OCI-LY7 (cell line): ENCODE measurements at regions of chr6 and their contacts with region 1.

Region 1: GRCh38 chr6:129498950-129499842 is 210.8 kb downstream of the ARHGAP18 start:
- DNase-seq: peak; percentile 52
- H3K4me3 ChIP-seq: no peak overlapping the region
- H3K27ac ChIP-seq: no peak overlapping the region
- H3K4me1 ChIP-seq: no peaks in the 10 kb centered on the region
- CTCF ChIP-seq: peak; percentile 90

Region 2: DNA sequence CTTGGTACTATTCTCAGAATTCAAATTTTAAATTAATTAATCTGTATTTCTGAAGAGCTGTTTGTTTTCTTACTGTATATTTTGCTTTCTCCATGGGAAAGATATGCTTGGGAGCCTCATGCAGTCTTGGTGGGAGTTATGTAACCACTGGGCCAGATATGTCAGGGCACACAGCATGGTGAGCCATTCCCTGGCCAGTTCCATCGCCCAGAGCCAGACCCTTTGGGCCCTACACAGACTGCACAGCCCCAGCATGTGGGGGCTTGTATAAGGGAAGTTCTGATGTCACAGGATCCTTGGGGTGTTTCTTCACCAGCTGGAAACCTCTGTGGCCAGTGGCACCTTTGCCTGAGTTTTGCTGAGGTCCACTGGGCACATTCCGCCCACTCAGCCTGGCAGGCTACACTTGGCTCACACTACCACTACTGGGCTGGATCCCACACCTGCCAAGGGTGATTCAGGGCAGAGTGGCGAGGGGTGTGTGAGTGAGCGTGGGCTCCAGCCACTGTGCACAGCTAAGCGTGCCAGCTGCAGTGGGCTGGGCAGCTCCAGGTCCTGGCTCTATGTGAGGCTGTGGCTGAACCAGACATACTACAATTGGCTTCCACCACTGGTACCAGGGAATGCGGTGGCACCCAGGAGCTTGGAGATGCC is 82.7 kb before region 1 on chr6:
- CTCF ChIA-PET with region 1: no interaction called
- POLR2A ChIA-PET with region 1: no interaction called
- intact Hi-C with region 1: no loop called
- DNase-seq: no peak
- H3K4me3 ChIP-seq: no peak overlapping the region
- H3K27ac ChIP-seq: no peak overlapping the region
- H3K4me1 ChIP-seq: no peaks in the 10 kb centered on the region
- CTCF ChIP-seq: no peak

Region 3: DNA sequence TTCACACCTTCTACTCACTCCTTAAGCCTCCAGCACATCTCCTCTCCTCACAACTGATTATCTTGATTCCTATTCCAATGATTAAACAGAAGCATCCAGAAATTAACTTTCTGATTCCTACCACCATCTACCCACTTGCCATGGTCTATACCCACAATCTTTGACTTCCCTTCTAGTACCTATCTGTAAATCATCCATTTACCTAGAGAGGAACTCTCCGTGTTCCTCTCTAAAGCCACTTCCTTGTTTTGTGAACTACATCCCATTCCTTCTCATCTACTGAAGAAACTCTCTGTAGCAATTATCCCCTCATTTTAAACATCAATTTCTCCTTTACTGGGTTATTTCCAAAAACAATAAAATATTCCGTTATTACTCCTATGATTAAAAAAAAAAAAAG is 43.5 kb after region 1 on chr6:
- CTCF ChIA-PET with region 1: no interaction called
- POLR2A ChIA-PET with region 1: no interaction called
- intact Hi-C with region 1: no loop called
- DNase-seq: no peak
- H3K4me3 ChIP-seq: no peak overlapping the region
- H3K27ac ChIP-seq: no peak overlapping the region
- H3K4me1 ChIP-seq: no peaks in the 10 kb centered on the region
- CTCF ChIP-seq: no peak

Region 4: DNA sequence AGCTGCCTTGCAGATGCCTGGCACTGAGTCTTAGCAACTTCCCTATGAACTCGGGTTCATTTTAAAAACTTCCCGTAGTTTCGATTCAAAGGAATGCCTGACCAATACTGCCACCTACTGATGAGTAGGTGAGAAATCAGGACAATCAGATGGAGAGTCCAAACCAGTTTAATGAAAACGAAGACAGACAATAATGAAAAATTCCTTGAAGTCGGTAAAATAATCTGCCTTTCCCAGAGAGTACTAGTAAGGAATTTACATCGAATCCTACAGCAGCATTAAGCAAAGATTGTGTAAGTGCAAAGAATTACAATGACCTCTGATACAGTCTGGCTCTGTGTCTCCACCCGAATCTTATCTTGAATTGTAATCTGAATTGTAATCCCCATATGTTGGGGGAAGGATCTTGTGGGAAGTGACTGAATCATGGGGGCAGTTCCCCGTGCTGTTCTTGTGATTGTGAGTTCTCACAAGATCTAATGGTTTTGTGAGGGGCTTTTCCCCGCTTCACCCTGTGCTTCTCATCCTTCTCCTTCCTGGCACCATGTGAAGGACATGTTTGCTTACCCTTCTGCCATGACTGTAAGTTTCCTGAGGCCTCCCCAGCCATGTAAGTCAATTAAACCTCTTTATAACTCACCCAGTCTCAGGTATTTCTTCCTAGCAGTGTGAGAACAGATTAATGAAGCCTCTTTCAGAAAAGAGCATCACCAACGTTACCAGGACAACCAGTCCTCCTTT is 76.4 kb after region 1 on chr6:
- CTCF ChIA-PET with region 1: no interaction called
- POLR2A ChIA-PET with region 1: no interaction called
- intact Hi-C with region 1: loop called (anchors 5 kb)
- DNase-seq: peak; percentile 10
- H3K4me3 ChIP-seq: no peak overlapping the region
- H3K27ac ChIP-seq: no peak overlapping the region
- H3K4me1 ChIP-seq: peaks cover 10% of the 10 kb centered on the region
- CTCF ChIP-seq: peak; percentile 85

Region 5: DNA sequence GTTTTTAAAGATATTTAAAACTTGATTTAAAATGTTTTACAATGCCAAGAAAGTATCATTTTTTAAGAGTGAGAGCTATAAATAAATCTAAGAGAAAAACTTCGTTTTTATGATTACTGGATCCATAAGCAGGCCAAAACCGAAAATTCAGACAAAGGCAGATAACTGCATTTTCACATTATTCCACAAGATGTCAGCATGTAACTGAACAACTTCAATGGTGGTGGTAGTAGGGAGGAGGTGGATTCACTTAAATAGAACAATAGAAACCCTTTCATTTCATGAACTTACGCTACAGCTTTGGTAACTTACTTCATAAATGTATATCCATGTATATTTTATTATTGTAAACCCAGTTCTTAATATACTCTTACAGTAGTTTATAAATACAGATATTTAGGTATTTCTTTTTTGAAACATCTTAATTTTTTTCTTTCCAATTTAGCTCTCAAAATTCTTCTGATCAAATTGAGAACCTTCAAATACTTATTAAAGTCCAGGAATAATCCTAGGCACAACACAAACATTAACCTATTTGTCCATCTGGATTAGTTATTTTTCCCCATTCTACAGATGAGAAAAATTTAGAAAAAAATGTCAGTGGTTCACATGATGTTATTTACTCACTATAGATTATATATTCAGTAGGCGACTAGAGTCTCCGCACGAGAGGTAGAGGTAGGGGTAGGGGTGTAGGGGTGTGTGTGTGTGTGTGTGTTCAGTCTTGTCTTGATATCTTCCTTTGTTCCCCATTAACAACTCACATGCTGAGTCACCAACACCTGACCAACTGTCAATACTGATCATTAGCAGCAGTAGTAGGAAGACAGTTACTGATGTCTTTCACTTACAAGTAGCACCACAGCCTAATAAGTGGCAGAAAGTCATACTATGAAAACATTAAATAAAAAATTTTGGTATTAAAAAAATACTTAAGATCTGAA is 99.3 kb after region 1 on chr6:
- CTCF ChIA-PET with region 1: no interaction called
- POLR2A ChIA-PET with region 1: interaction called, 3 read pairs
- intact Hi-C with region 1: loop called (anchors 5 kb)
- DNase-seq: peak; percentile 77
- H3K4me3 ChIP-seq: no peak overlapping the region
- H3K27ac ChIP-seq: no peak overlapping the region
- H3K4me1 ChIP-seq: peaks cover 12% of the 10 kb centered on the region
- CTCF ChIP-seq: peak; percentile 98

Region 6: GRCh38 chr6:129730477-129731165 is 231.4 kb after region 1 on chr6:
- CTCF ChIA-PET with region 1: no interaction called
- POLR2A ChIA-PET with region 1: no interaction called
- intact Hi-C with region 1: loop called (anchors 1 kb)
- DNase-seq: peak; percentile 64
- H3K4me3 ChIP-seq: no peak overlapping the region
- H3K27ac ChIP-seq: no peak overlapping the region
- H3K4me1 ChIP-seq: no peaks in the 10 kb centered on the region
- CTCF ChIP-seq: peak; percentile 95

Region 7: GRCh38 chr6:129936329-129937165 is 437.4 kb after region 1 on chr6:
- CTCF ChIA-PET with region 1: no interaction called
- POLR2A ChIA-PET with region 1: interaction called, 5 read pairs
- intact Hi-C with region 1: loop called (anchors 1 kb)
- DNase-seq: peak; percentile 61
- H3K4me3 ChIP-seq: no peak overlapping the region
- H3K27ac ChIP-seq: no peak overlapping the region
- H3K4me1 ChIP-seq: no peaks in the 10 kb centered on the region
- CTCF ChIP-seq: peak; percentile 97

Region 8: DNA sequence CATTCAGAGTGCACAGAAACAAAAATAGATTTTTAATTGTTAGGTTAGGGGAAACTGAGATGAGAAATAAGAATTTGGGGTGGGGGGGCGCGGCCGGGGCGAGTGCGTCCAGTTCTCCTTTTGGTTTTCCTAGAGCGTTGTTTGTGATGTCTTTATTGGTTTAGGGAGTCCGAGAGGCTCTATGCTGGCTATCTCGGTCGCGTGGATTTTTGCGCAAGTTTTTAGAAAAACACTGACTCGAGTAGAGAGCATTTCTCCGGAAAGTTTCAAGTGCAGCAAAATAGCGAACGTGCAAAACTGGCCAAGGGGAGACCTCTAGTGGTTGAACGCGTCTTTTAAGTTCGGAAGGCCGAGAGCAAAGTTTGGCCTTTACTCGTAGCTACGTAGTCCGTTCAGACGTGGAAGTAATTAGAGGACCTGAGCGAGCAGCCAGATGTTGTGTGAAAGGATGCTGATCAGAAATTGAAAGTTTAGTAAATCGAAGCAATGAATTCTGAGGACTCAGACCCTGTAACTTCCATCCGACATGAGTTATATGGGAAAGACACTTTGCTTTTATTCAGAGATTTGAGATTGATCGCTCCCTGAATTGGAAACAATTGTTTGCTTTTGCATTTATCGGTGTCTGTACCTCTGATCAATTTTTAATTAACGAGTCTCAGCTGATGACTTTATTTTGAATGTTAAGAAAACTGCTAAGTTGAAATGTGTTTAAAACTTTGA is 521.9 kb after region 1 on chr6:
- CTCF ChIA-PET with region 1: no interaction called
- POLR2A ChIA-PET with region 1: no interaction called
- intact Hi-C with region 1: loop called (anchors 1 kb)
- DNase-seq: peak; percentile 86
- H3K4me3 ChIP-seq: peak overlapping the region; percentile 71
- H3K27ac ChIP-seq: peak overlapping the region; percentile 13
- H3K4me1 ChIP-seq: peaks cover 9% of the 10 kb centered on the region
- CTCF ChIP-seq: peak; percentile 89